WTC11 (cell line): ENCODE measurements at regions of chr17 and their contacts with region 1.

Region 1: GRCh38 chr17:72430611-72431432 is 310.0 kb downstream of the SOX9 start:
- DNase-seq: peak; percentile 54
- ATAC-seq: peak; percentile 89
- H3K4me3 Mint-ChIP-seq: no peak overlapping the region
- H3K27ac Mint-ChIP-seq: no peak overlapping the region; the same call in 1 of the 2 replicates
- H3K4me1 Mint-ChIP-seq: peaks cover 9% of the 10 kb centered on the region
- H3K27me3 Mint-ChIP-seq: no peaks in the 10 kb centered on the region; the same call in 1 of the 2 replicates
- CTCF ChIP-seq: peak; percentile 50

Region 2: GRCh38 chr17:72120642-72121163 is 310.1 kb before region 1 on chr17 and contains the start of gene SOX9:
- CTCF ChIA-PET with region 1: interaction called, 28 read pairs
- POLR2A ChIA-PET with region 1: interaction called, 7 read pairs
- DNase-seq: peak; percentile 89
- ATAC-seq: peak; percentile 75
- H3K4me3 Mint-ChIP-seq: peak within 1 kb of the TSS; percentile 95
- H3K27ac Mint-ChIP-seq: no peak within 1 kb of the TSS
- H3K4me1 Mint-ChIP-seq: peaks cover 51% of the 10 kb centered on the region
- H3K27me3 Mint-ChIP-seq: peaks cover 59% of the 10 kb centered on the region
- CTCF ChIP-seq: no peak
- total RNA-seq, gene SOX9: 8.1 to 9.0 TPM (median 8.9 TPM) in 3 replicates

Region 3: DNA sequence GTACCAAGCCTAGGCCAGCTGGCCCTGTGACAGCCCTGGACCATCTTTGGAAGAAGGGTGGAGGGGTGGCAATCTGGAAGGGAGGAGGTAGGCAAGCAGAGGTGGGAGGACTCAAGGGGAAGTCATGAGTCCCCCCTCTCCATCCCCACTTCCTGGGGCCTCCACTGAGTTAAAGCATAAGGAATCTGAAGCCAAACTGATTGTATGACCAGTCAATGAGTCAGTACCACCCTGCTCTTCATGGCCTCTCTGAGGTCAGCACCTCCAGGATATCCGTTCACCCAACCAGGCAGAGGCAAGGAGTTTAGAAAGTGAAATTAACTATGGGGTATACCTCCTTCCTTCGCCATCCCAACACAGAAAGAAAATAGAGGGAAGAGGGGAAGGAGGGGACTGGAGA is 37.3 kb before region 1 on chr17:
- CTCF ChIA-PET with region 1: interaction called, 11 read pairs
- POLR2A ChIA-PET with region 1: no interaction called
- DNase-seq: no peak
- ATAC-seq: no peak
- H3K4me3 Mint-ChIP-seq: no peak overlapping the region
- H3K27ac Mint-ChIP-seq: no peak overlapping the region
- H3K4me1 Mint-ChIP-seq: peaks cover 22% of the 10 kb centered on the region
- H3K27me3 Mint-ChIP-seq: peaks cover 10% of the 10 kb centered on the region
- CTCF ChIP-seq: no peak

Region 4: GRCh38 chr17:72539981-72540897 is 109.4 kb after region 1 on chr17:
- CTCF ChIA-PET with region 1: interaction called, 27 read pairs
- POLR2A ChIA-PET with region 1: no interaction called
- DNase-seq: peak; percentile 82
- ATAC-seq: peak; percentile 83
- H3K4me3 Mint-ChIP-seq: peak overlapping the region; percentile 64
- H3K27ac Mint-ChIP-seq: peak overlapping the region; percentile 91
- H3K4me1 Mint-ChIP-seq: peaks cover 19% of the 10 kb centered on the region
- H3K27me3 Mint-ChIP-seq: no peaks in the 10 kb centered on the region; the same call in none of the 2 replicates
- CTCF ChIP-seq: peak; percentile 88

Region 5: GRCh38 chr17:72631949-72632684 is 201.3 kb after region 1 on chr17:
- CTCF ChIA-PET with region 1: no interaction called
- POLR2A ChIA-PET with region 1: no interaction called
- DNase-seq: no peak
- ATAC-seq: no peak
- H3K4me3 Mint-ChIP-seq: no peak overlapping the region
- H3K27ac Mint-ChIP-seq: no peak overlapping the region
- H3K4me1 Mint-ChIP-seq: peaks cover 2% of the 10 kb centered on the region; the same call in 1 of the 2 replicates
- H3K27me3 Mint-ChIP-seq: no peaks in the 10 kb centered on the region; the same call in 1 of the 2 replicates
- CTCF ChIP-seq: no peak